PC-3 (cell line): ENCODE measurements at regions of chr9 and their contacts with region 1.

Region 1: DNA sequence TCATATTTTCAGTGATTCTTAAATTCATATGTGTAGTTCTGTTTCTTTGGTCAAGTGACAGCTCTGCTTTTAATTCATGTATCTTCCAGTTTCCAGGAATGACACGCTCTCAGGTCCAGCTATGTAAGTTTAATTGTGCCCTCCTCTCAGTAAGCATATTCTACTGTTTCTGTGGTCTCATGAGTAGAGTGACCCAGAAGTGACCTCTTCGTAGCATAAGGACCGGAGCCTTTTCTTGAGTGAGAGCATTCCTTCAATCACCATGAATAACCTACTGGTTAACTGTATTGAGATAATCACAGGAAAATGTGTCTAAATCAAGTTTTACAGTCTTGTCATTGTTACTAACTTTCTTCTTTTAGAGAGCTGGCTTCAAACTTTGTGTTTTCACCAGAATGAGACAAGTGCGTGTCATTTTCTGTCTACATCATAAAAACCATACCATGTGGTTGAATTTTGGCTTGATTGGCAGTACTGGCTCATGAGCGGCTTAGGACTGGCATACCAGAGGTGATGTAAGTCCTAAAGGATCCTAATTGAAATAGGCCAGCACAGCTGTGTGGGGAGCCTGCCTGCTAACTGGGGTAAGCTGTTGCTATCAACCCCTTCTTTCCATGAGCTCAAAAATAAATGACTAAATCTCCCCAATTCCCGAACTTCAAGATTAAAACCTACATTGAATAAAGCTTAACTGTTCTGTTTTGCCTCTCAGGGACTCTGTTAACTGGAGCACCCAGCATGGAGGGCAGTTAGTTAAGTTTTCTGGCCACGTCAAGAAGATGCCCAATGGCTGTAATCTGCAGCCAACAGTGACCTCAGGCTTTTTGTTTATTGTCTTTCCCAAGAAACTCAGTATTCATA is 4.8 kb downstream of the ADAMTSL1 start:
- DNase-seq: peak; percentile 90
- ATAC-seq: peak; percentile 71
- H3K4me3 ChIP-seq: no peak overlapping the region
- H3K27ac ChIP-seq: peak overlapping the region; percentile 98
- H3K4me1 ChIP-seq: peaks cover 75% of the 10 kb centered on the region
- H3K27me3 ChIP-seq: no peaks in the 10 kb centered on the region
- CTCF ChIP-seq: no peak

Region 2: GRCh38 chr9:18459958-18460584 is 18.7 kb before region 1 on chr9:
- CTCF ChIA-PET with region 1: no interaction called
- POLR2A ChIA-PET with region 1: interaction called, 3 read pairs
- intact Hi-C with region 1: loop called (anchors 1 kb)
- DNase-seq: peak; percentile 94
- ATAC-seq: peak; percentile 85
- H3K4me3 ChIP-seq: peak overlapping the region; percentile 51; the same call in 1 of the 2 replicates
- H3K27ac ChIP-seq: peak overlapping the region; percentile 89
- H3K4me1 ChIP-seq: peaks cover 60% of the 10 kb centered on the region
- H3K27me3 ChIP-seq: no peaks in the 10 kb centered on the region
- CTCF ChIP-seq: no peak

Region 3: GRCh38 chr9:18543406-18544192 is 64.9 kb after region 1 on chr9:
- CTCF ChIA-PET with region 1: no interaction called
- POLR2A ChIA-PET with region 1: no interaction called
- intact Hi-C with region 1: loop called (anchors 5 kb)
- DNase-seq: peak; percentile 81
- ATAC-seq: peak; percentile 73
- H3K4me3 ChIP-seq: no peak overlapping the region
- H3K27ac ChIP-seq: peak overlapping the region; percentile 95
- H3K4me1 ChIP-seq: peaks cover 34% of the 10 kb centered on the region
- H3K27me3 ChIP-seq: no peaks in the 10 kb centered on the region
- CTCF ChIP-seq: no peak

Region 4: DNA sequence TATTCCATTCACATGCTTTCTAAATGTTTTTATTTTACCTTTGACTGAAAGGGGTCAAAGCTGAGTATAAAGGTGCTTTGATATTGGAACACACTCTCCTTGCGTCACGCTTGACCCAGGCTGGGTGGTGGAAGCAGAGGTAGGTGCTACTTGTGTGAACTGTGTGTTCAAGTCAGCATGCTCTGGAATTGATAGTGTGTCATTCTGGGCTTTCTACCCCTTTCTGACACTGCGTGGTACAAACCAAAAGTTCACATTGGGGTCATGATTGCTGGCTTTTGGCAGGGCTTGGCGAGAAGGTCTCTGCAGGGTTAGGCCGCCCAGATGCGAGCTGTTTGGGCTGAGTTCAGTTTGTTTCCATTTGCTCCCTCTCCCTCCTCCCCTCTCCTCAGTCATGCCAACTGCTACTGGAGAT is 127.0 kb after region 1 on chr9:
- CTCF ChIA-PET with region 1: no interaction called
- POLR2A ChIA-PET with region 1: no interaction called
- intact Hi-C with region 1: no loop called
- DNase-seq: no peak
- ATAC-seq: no peak
- H3K4me3 ChIP-seq: no peak overlapping the region
- H3K27ac ChIP-seq: no peak overlapping the region
- H3K4me1 ChIP-seq: no peaks in the 10 kb centered on the region
- H3K27me3 ChIP-seq: no peaks in the 10 kb centered on the region
- CTCF ChIP-seq: no peak